ENCODE measurements at regions of chr2 and their contacts with region 1.

Region 1: GRCh38 chr2:26942543-26943295 is 27.7 kb upstream of the MAPRE3 start:
- H3K4me3 ChIP-seq: no peak overlapping the region
- H3K27ac ChIP-seq: no peak overlapping the region
- H3K4me1 ChIP-seq: no peaks in the 10 kb centered on the region
- CTCF ChIP-seq: peak; percentile 62

Region 2: GRCh38 chr2:26840937-26841613 is 101.6 kb before region 1 on chr2:
- CTCF ChIA-PET with region 1: interaction called, 156 read pairs
- POLR2A ChIA-PET with region 1: interaction called, 9 read pairs
- H3K4me3 ChIP-seq: no peak overlapping the region
- H3K27ac ChIP-seq: no peak overlapping the region
- H3K4me1 ChIP-seq: no peaks in the 10 kb centered on the region
- CTCF ChIP-seq: no peak

Region 3: GRCh38 chr2:27050281-27050995 is 107.7 kb after region 1 on chr2:
- CTCF ChIA-PET with region 1: no interaction called
- POLR2A ChIA-PET with region 1: no interaction called
- H3K4me3 ChIP-seq: peak overlapping the region; percentile 82
- H3K27ac ChIP-seq: peak overlapping the region; percentile 73
- H3K4me1 ChIP-seq: peaks cover 4% of the 10 kb centered on the region
- CTCF ChIP-seq: peak; percentile 72